OCI-LY7 (cell line): ENCODE measurements at regions of chr17 and their contacts with region 1.

Region 1: GRCh38 chr17:80252607-80253289 is 7.9 kb upstream of the RNF213 start:
- DNase-seq: peak; percentile 84
- H3K4me3 ChIP-seq: no peak overlapping the region
- H3K27ac ChIP-seq: no peak overlapping the region
- H3K4me1 ChIP-seq: peaks cover 14% of the 10 kb centered on the region
- CTCF ChIP-seq: peak; percentile 96

Region 2: DNA sequence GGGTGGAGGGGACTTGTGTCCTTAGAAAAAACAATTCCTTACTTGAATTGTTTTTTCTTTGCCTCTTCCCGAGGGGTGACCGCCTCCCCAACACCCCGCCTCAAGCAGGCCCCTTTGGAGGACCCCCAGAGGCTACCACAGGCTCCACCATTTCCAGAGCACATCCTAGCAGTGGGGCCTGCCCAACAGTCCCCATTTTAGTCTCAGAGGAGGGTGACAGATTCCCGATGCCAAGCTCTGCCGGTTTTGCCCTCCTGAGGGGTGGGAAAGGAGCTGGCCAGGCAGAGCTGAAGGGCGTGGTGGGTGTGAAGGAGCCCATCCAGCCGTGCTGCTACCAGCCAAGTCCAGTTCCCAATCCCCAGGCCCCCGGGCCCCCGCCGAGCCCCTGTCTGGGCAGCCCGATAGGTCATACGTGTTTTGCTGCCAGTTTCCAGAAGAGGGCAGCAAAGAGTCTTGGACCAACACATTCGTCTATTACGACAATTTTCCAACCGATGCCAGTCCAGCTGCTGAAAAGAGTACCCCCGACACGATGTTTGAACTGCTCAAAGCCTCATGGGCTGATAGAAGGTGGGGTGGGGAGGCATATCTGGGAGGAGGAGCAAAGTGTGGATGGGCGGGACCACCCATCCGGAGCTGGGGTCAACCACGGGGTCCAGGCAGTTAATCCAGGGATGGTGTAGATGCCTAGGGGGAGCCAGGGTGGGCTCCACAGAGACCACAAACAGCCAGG is 170.2 kb before region 1 on chr17:
- CTCF ChIA-PET with region 1: no interaction called
- POLR2A ChIA-PET with region 1: no interaction called
- intact Hi-C with region 1: loop called (anchors 1 kb)
- DNase-seq: peak; percentile 85
- H3K4me3 ChIP-seq: no peak overlapping the region
- H3K27ac ChIP-seq: no peak overlapping the region
- H3K4me1 ChIP-seq: no peaks in the 10 kb centered on the region
- CTCF ChIP-seq: peak; percentile 93

Region 3: DNA sequence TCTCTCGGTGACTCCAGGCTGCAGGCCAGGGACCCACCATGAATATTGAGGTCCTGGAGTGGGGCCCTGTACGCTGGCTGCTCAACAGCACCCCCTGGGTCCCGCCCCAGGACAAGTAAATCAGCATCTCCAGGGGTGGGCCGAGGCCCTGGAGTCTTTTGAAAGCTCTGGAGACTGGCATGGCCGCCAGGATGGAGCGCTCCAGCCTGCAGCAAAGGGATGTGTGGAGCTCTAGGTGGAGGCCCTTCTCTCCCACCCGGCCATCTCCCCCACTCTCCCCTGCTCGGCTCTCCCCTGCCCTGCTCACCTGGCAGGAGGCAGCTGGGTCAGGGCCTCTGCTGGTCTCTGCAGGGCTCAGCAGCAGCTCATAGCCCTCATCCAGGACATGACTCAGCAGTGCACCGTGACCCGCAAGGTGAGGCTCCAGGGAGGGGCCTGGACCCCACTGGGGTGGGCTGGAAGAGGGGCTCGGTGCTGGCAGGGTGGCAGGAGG is 49.2 kb before region 1 on chr17:
- CTCF ChIA-PET with region 1: no interaction called
- POLR2A ChIA-PET with region 1: no interaction called
- intact Hi-C with region 1: no loop called
- DNase-seq: peak; percentile 13
- H3K4me3 ChIP-seq: no peak overlapping the region
- H3K27ac ChIP-seq: no peak overlapping the region
- H3K4me1 ChIP-seq: no peaks in the 10 kb centered on the region
- CTCF ChIP-seq: peak; percentile 49

Region 4: DNA sequence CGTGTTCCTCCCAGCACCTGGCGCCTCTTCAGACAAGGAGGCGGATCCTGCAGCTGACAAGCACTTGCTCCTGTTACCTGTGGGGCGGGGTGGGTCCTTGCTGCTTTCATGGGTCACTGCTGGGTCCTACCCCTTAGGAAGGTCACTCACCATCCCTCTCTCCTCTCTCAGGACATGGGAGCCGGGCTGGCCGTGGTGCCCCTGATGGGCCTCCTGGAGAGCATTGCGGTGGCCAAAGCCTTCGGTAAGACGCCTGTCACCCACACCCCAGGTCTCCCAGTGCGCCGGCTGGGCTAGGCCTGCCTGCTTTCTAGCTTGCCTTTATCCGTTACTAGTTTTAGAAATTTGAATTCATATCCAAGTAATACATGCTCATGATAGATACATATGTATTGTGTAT is 15.4 kb before region 1 on chr17:
- CTCF ChIA-PET with region 1: no interaction called
- POLR2A ChIA-PET with region 1: no interaction called
- intact Hi-C with region 1: no loop called
- DNase-seq: no peak
- H3K4me3 ChIP-seq: no peak overlapping the region
- H3K27ac ChIP-seq: no peak overlapping the region
- H3K4me1 ChIP-seq: no peaks in the 10 kb centered on the region
- CTCF ChIP-seq: no peak